Thyroid gland (tissue), 4 donors: ENCODE measurements at regions of chr12 and their contacts with region 1.

Region 1: GRCh38 chr12:101839324-101840283 is 8.8 kb upstream of the GNPTAB start:
- DNase-seq: peak; percentile 65 to 68
- H3K4me3 ChIP-seq: no peak overlapping the region
- H3K27ac ChIP-seq: no peak overlapping the region
- H3K4me1 ChIP-seq: peaks cover 0 to 3% of the 10 kb centered on the region in 2 donors
- H3K27me3 ChIP-seq: no peaks in the 10 kb centered on the region
- CTCF ChIP-seq: peak; percentile 72 to 94 (median 76)
- POLR2A ChIP-seq: no peak

Region 2: GRCh38 chr12:101414533-101415119 is 425.0 kb before region 1 on chr12:
- intact Hi-C with region 1: loop called (anchors 10 kb)
- DNase-seq: peak; percentile 18 to 21
- H3K4me3 ChIP-seq: no peak overlapping the region
- H3K27ac ChIP-seq: no peak overlapping the region
- H3K4me1 ChIP-seq: no peaks in the 10 kb centered on the region
- H3K27me3 ChIP-seq: no peaks in the 10 kb centered on the region
- CTCF ChIP-seq: peak in 5 of 6 experiments; percentile 17 to 68 (median 51)
- POLR2A ChIP-seq: no peak

Region 3: DNA sequence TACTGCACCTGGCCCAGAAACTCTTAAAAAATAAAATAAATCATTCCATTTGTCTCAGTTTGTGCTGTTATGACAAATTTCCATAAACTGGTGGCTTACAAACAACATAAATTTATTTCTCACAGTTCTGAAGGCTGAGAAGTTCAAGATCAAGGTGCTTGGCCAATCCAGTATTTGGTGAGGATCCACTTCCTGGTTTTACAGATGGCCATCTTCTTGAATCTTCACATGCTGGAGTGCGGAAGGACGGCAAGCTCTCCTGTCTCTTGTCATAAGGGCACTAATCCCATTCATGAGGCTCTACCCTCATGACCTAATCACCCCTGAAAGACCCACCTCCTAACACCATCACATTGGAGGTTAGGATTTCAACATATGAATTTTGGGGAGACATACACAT is 274.7 kb before region 1 on chr12:
- intact Hi-C with region 1: loop called (anchors 10 kb)
- DNase-seq: no peak
- H3K4me3 ChIP-seq: no peak overlapping the region
- H3K27ac ChIP-seq: no peak overlapping the region
- H3K4me1 ChIP-seq: no peaks in the 10 kb centered on the region
- H3K27me3 ChIP-seq: no peaks in the 10 kb centered on the region
- CTCF ChIP-seq: no peak
- POLR2A ChIP-seq: no peak

Region 4: DNA sequence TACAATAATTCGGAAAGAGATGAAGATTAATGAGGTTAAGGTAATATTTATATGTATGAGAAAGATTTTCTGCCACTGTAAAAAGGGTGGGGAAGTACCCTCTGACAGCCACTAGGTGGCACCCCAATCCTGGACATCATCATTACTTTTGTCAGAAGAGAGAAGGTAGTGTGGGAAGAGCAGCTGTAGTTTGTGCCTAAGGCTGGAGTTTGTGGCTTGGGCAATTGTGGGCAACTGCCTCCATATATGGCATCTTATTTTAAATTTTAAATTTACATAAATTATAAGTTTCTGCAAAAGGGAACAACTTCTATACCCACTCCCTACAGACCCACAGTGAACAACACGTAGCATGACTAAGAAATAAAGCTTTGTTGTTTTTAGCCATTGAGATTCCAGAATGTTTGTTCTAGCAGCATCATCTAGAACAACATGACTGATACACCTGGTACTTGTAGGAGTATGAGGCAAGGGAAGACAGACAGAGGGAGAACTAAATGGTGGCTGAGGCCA is 65.9 kb before region 1 on chr12:
- intact Hi-C with region 1: loop called (anchors 5 kb)
- DNase-seq: peak; percentile 50 to 62
- H3K4me3 ChIP-seq: no peak overlapping the region
- H3K27ac ChIP-seq: no peak overlapping the region
- H3K4me1 ChIP-seq: no peaks in the 10 kb centered on the region
- H3K27me3 ChIP-seq: no peaks in the 10 kb centered on the region
- CTCF ChIP-seq: peak; percentile 82 to 97 (median 86)
- POLR2A ChIP-seq: no peak

Region 5: DNA sequence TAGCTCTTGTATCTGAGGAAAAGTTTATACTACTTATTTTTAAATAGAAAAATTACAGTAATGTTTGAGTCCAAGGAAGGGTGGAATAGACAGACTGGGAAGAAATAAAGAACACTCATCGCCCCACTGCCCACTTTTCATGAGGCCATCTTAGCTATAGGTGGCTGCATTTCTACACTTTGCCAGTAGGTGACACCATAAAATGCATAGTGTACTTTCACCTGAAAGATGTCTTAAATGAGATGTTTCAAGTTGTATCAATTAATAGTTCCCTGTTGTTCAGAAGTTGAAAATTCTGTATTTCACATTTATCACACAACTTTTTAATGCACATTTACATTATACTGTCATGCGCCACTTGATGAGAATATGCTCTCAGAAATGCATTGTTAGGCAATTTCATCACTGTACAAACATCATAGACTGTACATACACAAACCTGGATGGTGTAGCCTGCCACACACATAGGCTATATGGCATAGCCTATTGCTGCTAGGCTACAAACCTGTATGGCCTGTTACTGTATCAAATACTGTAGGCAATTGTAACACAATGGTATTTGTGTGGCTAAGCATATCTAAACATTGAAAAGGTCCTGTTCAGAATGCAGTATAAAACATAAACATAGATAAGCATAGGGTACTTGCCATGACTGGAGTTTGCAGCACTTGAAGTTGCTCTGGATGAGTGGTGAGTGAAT is 330.5 kb after region 1 on chr12:
- intact Hi-C with region 1: no loop called
- DNase-seq: peak; percentile 3
- H3K4me3 ChIP-seq: no peak overlapping the region
- H3K27ac ChIP-seq: no peak overlapping the region
- H3K4me1 ChIP-seq: no peaks in the 10 kb centered on the region
- H3K27me3 ChIP-seq: no peaks in the 10 kb centered on the region
- CTCF ChIP-seq: peak; percentile 38 to 78 (median 64)
- POLR2A ChIP-seq: no peak